ENCODE measurements at regions of chr10 and their contacts with region 1.

Region 1: GRCh38 chr10:101818119-101818871 is at the start of gene OGA:
- DNase-seq: peak; percentile 99
- H3K4me3 Mint-ChIP-seq: peak within 1 kb of the TSS; percentile 92
- H3K27ac Mint-ChIP-seq: peak within 1 kb of the TSS; percentile 93
- H3K4me1 Mint-ChIP-seq: peaks cover 40% of the 10 kb centered on the region
- H3K27me3 Mint-ChIP-seq: no peaks in the 10 kb centered on the region
- total RNA-seq, gene OGA: 90.8 to 96.3 TPM

Region 2: DNA sequence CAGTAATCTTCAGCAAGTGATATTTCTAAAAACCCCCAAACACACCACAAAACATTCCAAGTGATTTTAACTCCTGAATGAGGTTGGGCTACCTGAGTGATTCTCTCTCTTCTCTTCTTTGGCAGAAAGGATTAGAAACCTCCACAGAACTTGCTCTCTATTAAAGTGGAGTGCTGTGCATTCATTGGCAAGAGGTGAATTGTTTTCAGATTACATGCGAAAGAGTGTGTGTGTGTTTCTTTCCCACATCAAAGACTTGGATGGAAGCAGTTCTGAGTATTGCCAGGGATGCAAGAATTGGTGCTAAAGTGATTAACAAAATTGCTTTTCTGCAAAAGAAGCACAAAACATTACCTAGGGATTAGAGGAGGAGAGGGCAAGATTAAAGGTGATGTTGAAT is 110.2 kb before region 1 on chr10:
- CTCF ChIA-PET with region 1: no interaction called
- intact Hi-C with region 1: loop called (anchors 1 kb)
- DNase-seq: no peak
- H3K4me3 Mint-ChIP-seq: no peak overlapping the region
- H3K27ac Mint-ChIP-seq: no peak overlapping the region
- H3K4me1 Mint-ChIP-seq: peaks cover 20% of the 10 kb centered on the region
- H3K27me3 Mint-ChIP-seq: peaks cover 46% of the 10 kb centered on the region

Region 3: DNA sequence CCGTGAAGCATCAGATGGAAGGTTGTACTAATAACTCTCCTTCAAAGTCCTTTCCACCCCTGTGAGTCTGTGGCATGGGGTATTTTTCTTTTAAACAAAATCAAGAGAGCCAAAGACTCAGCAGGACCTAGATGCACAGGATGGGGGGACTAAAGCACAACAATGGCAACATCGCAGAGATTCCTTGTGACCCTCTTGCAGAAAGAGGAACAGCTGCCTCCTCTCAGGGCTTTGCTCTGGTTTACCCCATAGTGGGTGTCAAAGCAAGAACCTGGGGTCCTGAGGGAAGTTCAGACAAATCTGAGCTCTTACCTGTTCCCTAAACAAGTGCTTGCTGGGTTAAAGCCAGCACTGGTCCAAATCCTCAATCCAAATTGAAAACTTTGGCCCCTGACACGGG is 81.6 kb before region 1 on chr10:
- CTCF ChIA-PET with region 1: no interaction called
- intact Hi-C with region 1: no loop called
- DNase-seq: no peak
- H3K4me3 Mint-ChIP-seq: no peak overlapping the region
- H3K27ac Mint-ChIP-seq: no peak overlapping the region
- H3K4me1 Mint-ChIP-seq: no peaks in the 10 kb centered on the region
- H3K27me3 Mint-ChIP-seq: peaks cover 13% of the 10 kb centered on the region

Region 4: GRCh38 chr10:101830322-101831168 is 12.2 kb after region 1 on chr10:
- CTCF ChIA-PET with region 1: interaction called, 8 read pairs
- intact Hi-C with region 1: loop called (anchors 1 kb)
- DNase-seq: peak; percentile 88
- H3K4me3 Mint-ChIP-seq: peak overlapping the region; percentile 72
- H3K27ac Mint-ChIP-seq: peak overlapping the region; percentile 84
- H3K4me1 Mint-ChIP-seq: peaks cover 48% of the 10 kb centered on the region
- H3K27me3 Mint-ChIP-seq: no peaks in the 10 kb centered on the region

Region 5: DNA sequence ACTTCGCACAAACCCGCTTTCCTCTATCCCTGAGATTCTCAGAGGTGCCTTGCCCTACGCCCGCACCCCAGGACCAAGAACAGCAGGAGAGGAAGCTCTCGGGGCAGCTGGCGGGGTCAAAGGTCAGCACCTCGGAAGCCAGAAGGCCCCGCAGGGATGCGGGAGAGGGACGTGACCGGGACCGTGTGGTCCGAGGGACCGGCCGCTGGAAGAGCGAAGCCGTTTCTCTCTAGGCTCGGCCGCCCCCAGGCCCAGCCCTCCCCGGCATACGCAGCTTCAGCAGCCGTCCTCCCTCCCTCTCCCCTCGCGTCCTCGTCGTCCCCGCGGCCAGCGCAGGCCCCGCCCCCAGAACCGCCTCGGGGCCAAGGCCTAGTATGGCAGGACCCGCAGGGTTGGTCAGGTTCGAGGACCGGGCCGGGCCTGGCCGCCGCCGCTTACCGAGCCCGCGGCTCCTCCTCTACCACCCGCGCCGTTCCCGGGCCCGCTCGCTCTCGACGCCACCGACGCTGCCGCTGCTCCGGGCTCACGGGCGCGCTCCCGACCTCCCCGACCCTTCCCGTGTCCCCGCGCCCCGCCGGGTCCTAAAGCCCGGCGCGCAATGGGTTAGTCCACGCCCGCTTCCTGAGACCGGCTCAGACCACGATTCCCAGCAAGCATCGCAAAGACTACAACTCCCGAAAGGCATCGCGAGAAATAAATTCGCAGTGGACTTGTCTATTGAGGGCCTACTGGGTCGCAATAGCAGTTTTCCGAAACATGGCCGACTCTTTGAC is 237.5 kb after region 1 on chr10 and contains the start of gene ARMH3:
- CTCF ChIA-PET with region 1: no interaction called
- intact Hi-C with region 1: loop called (anchors 1 kb)
- DNase-seq: peak; percentile 96
- H3K4me3 Mint-ChIP-seq: peak within 1 kb of the TSS; percentile 91
- H3K27ac Mint-ChIP-seq: peak within 1 kb of the TSS; percentile 90
- H3K4me1 Mint-ChIP-seq: peaks cover 41% of the 10 kb centered on the region
- H3K27me3 Mint-ChIP-seq: no peaks in the 10 kb centered on the region
- total RNA-seq, gene ARMH3: 12.3 to 12.6 TPM

Region 6: DNA sequence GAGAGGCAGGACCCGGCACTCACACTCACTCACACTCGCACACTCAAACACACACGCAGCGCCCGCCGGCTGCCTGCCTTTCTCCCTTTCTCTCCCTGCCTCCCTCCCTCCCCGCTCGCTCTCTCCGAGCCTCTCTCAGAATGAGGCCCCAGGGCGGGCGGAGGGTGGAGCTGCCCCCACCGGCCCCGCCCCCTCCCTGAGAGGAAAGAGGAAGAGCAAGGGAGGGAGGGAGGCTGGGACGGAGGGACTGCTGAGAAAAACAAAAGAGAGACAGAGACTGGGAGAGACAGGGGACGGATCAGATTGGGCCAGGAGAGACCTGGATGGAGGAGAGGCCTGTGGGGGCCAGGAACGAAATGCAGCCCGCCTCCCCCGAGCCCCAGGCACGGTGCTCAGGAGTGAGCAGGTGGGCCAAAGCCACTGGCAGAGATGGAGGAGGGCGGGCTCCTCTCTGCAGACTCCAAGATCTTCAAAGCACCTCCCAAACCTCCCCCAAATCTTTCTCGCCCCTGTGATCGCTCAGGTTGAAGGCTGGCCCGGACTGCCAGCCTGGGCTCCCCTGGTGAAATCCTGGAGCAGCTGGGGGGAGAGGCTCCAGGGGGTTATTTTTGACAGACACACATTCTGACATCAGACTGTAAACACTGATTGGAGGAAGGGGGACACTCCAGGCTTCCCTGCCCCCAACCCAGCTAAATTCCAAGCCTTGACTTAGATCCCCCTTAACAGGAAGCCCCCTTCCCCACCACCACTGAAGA is 296.7 kb after region 1 on chr10:
- CTCF ChIA-PET with region 1: interaction called, 4 read pairs
- intact Hi-C with region 1: loop called (anchors 1 kb)
- DNase-seq: peak; percentile 92
- H3K4me3 Mint-ChIP-seq: peak overlapping the region; percentile 93
- H3K27ac Mint-ChIP-seq: peak overlapping the region; percentile 98
- H3K4me1 Mint-ChIP-seq: peaks cover 53% of the 10 kb centered on the region
- H3K27me3 Mint-ChIP-seq: no peaks in the 10 kb centered on the region

Region 7: DNA sequence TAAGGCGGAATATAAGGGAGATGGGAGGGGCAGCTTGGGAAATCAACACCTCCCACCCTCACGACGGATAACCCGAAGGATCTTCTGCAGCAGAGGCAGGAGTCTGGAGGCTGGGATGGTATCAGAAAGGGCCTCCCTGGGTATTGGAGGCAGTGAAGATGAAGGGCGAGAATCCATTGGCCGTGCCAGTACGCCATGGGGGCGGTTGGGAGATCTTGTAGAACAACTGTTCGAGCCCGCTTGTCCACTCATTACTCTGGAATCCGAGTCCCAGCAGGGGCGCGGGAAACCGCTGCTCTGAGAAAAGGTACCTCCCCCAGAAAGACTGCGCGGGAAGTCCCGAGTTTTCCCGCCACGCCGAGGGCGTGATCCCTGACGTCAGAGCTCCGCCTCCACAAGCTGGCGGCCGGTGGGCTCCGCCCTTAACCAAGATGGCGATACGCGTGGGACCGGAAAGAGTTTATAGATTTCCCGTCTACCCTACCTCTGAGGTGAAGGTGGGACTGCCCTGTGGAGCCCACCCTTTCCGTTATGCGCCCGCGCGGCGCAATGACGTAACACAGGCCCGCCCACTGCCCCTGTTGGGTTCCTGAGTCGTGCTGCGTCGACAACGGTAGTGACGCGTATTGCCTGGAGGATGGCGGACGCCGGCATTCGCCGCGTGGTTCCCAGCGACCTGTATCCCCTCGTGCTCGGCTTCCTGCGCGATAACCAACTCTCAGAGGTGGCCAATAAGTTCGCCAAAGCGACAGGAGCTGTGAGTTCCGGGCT is 333.7 kb after region 1 on chr10 and contains the start of gene NOLC1:
- CTCF ChIA-PET with region 1: no interaction called
- intact Hi-C with region 1: loop called (anchors 1 kb)
- DNase-seq: peak; percentile 100
- H3K4me3 Mint-ChIP-seq: peak within 1 kb of the TSS; percentile 98
- H3K27ac Mint-ChIP-seq: peak within 1 kb of the TSS; percentile 96
- H3K4me1 Mint-ChIP-seq: peaks cover 53% of the 10 kb centered on the region
- H3K27me3 Mint-ChIP-seq: no peaks in the 10 kb centered on the region
- total RNA-seq, gene NOLC1: 182 to 194 TPM

Region 8: DNA sequence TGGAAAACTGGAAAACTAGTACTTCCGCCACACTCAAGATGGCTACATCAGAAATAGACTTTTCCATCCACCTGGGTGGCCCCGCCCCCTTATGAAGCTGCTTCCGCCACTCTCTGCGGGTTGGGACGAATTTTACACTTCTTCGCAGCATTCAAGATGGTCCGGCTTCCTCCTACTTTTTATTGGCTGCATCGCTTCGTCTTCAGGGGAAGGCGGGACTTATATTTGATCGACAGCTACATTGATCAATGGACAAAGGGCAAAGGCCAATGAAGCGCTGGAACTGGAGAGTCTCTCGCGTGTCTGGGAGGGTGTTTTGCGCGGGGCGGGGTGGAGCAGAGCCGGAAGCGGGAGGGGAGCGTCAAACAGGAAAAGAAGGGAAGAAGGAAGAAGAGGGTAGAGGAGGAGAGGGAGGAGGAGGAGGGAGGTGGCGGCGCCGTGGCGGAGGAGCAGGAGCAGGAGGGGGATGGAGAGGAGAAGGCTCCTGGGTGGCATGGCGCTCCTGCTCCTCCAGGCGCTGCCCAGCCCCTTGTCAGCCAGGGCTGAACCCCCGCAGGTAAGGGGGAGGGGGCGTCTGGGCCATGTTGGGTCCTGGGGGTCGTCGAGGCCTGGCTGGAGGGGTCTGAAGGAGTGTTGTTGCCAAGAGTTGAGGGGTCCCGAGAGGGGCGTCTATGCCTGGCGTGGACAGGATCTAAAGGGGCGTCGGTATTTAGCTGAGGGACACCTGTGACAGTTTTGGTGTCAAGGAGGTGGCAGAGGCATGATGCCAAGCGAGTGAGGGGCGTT is 925.5 kb after region 1 on chr10 and contains the start of gene WBP1L:
- CTCF ChIA-PET with region 1: no interaction called
- intact Hi-C with region 1: loop called (anchors 1 kb)
- DNase-seq: peak; percentile 97
- H3K4me3 Mint-ChIP-seq: peak within 1 kb of the TSS; percentile 90
- H3K27ac Mint-ChIP-seq: peak within 1 kb of the TSS; percentile 83
- H3K4me1 Mint-ChIP-seq: peaks cover 43% of the 10 kb centered on the region
- H3K27me3 Mint-ChIP-seq: no peaks in the 10 kb centered on the region
- total RNA-seq, gene WBP1L: 10.5 to 11.8 TPM